MCF 10A (cell line): ENCODE measurements at regions of chr7 and their contacts with region 1.

Region 1: DNA sequence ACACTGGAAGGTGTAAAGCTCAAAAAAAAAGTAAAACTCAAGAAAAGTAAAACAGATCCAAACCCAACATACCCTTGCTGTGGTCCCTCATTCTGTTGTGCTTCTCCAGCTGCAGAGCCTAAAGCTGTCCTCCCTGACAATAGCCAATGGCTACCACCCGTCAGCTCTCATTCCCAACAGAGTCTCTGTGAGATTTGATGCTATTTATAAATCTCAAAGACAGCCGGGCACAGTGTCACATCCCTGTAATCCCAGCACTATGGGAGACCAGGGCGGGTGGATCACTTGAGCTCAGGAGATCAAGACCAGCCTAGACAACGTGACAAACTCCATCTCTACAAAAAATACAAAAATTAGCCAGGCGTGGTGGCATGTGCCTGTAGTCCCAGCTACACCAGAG is 116.0 kb downstream of the KMT2E start:
- DNase-seq: no peak
- H3K4me3 Mint-ChIP-seq: no peak overlapping the region
- H3K27ac Mint-ChIP-seq: no peak overlapping the region
- H3K4me1 Mint-ChIP-seq: no peaks in the 10 kb centered on the region
- H3K27me3 Mint-ChIP-seq: no peaks in the 10 kb centered on the region
- CTCF ChIP-seq: no peak

Region 2: GRCh38 chr7:105141068-105141467 is 11.0 kb after region 1 on chr7:
- CTCF ChIA-PET with region 1: interaction called, 11 read pairs
- POLR2A ChIA-PET with region 1: interaction called, 4 read pairs
- intact Hi-C with region 1: no loop called
- DNase-seq: peak; percentile 18
- H3K4me3 Mint-ChIP-seq: no peak overlapping the region
- H3K27ac Mint-ChIP-seq: peak overlapping the region; percentile 27
- H3K4me1 Mint-ChIP-seq: no peaks in the 10 kb centered on the region
- H3K27me3 Mint-ChIP-seq: no peaks in the 10 kb centered on the region
- CTCF ChIP-seq: peak; percentile 28